Tibial artery (tissue), 4 donors: ENCODE measurements at regions of chr2 and their contacts with region 1.

Region 1: DNA sequence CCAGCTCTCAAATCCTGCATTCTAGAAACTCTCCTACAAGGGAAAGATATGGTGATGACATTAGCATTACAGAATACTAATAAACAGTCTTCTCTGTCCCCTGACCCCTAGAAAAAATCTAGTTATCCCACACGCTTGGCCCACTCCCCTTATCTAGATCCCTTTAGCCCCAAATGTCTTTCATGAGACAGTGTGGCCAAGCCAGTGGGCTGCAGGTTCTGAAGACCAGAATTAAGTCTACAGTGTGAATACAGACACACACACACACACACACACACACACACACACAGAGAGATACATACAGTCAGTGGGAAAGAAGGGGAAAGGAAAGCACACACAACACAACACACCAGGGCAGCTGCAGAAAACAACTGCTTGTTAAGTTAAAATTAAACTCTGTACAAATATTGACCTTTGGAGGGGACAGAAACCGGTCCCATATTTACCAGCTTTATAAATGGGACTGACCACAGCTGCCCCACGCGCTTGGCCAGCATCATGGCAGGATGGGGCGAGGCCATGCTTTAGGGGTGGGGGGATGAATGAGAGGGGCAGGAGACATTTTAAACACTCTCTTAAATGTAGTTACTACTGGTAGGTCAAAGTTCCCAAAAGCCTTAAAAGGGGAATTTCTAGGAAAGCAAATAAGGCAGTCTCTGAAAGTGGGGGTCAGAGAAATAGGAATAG is 49.1 kb downstream of the NHEJ1 start:
- DNase-seq: no peak
- H3K4me3 ChIP-seq: no peak overlapping the region
- H3K27ac ChIP-seq: no peak overlapping the region
- H3K4me1 ChIP-seq: peaks cover 0 to 4% (median 2%) of the 10 kb centered on the region in 4 donors
- H3K27me3 ChIP-seq: no peaks in the 10 kb centered on the region
- CTCF ChIP-seq: no peak

Region 2: GRCh38 chr2:219079417-219079816 is 32.1 kb before region 1 on chr2:
- intact Hi-C with region 1: loop called (anchors 5 kb)
- DNase-seq: no peak
- H3K4me3 ChIP-seq: no peak overlapping the region
- H3K27ac ChIP-seq: no peak overlapping the region
- H3K4me1 ChIP-seq: no peaks in the 10 kb centered on the region
- H3K27me3 ChIP-seq: no peaks in the 10 kb centered on the region
- CTCF ChIP-seq: no peak